IMR-90 (cell line): ENCODE measurements at regions of chr2 and their contacts with region 1.

Region 1: DNA sequence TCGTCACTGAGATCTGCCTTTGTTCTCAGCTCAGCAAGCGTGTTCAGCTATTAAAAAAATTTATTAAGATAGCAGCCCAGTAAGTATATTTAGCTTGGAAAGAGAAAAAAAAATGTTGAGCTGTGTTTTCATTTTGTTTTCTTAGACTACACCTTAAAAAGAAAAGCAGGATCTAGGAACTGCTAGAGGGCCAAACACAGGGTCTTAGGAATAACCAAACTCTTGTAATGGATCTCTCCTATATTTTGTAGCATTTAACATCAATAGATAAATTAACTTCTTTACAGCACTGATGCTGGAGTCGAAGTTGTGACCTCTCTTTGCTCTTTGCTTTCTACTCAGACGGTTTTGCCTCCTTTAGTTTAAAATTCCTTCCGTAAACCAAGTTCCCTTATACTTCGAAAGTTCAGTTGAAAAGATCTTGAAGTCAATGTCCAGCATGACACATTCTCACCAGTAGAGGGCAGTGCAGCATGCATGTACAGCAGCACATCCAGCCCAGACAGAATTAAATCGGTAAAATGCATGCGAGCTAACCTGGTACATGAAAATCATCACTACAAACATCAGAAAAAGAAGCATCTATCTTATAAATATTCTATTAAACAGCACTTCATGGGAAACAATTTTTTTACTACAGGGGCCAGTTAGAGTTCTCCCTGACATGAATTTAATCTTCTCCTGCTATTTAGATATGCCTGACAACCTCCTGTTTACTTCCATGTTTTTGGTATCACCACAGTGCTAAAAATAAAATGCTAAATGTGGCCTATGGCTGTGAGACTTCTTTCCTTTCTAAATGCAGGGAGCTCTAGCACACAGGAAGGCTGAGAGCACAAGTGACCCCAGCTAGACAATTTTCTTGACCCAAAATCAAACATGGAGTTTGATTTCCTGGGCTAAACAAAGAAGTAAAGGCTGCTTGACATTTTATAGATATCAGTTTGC is 48.2 kb upstream of the MAP3K20 start:
- DNase-seq: peak; percentile 93
- ATAC-seq: peak; percentile 77
- H3K4me3 ChIP-seq: no peak overlapping the region
- H3K27ac ChIP-seq: peak overlapping the region; percentile 99; the same call in 1 of the 2 replicates
- H3K4me1 ChIP-seq: peaks cover 9% of the 10 kb centered on the region
- H3K27me3 ChIP-seq: no peaks in the 10 kb centered on the region
- CTCF ChIP-seq: peak; percentile 96
- POLR2A ChIP-seq: peak; percentile 51; the same call in 1 of the 2 replicates
- RAD21 ChIP-seq: peak; percentile 98

Region 2: GRCh38 chr2:172919732-172920131 is 107.7 kb before region 1 on chr2:
- CTCF ChIA-PET with region 1: no interaction called
- POLR2A ChIA-PET with region 1: no interaction called
- dilution Hi-C with region 1: no loop called
- in situ Hi-C with region 1: no loop called
- intact Hi-C with region 1: no loop called
- DNase-seq: no peak
- ATAC-seq: no peak
- H3K4me3 ChIP-seq: no peak overlapping the region
- H3K27ac ChIP-seq: no peak overlapping the region
- H3K4me1 ChIP-seq: peaks cover 6% of the 10 kb centered on the region; the same call in 1 of the 2 replicates
- H3K27me3 ChIP-seq: no peaks in the 10 kb centered on the region
- CTCF ChIP-seq: no peak
- POLR2A ChIP-seq: no peak
- RAD21 ChIP-seq: no peak

Region 3: GRCh38 chr2:173210270-173211196 is 183.1 kb after region 1 on chr2:
- CTCF ChIA-PET with region 1: interaction called, 51 read pairs
- POLR2A ChIA-PET with region 1: no interaction called
- dilution Hi-C with region 1: no loop called
- in situ Hi-C with region 1: loop called (anchors 5 kb)
- intact Hi-C with region 1: loop called (anchors 1 kb)
- DNase-seq: peak; percentile 97
- ATAC-seq: peak; percentile 98
- H3K4me3 ChIP-seq: no peak overlapping the region
- H3K27ac ChIP-seq: peak overlapping the region; percentile 36; the same call in 1 of the 2 replicates
- H3K4me1 ChIP-seq: peaks cover 2% of the 10 kb centered on the region; the same call in 1 of the 2 replicates
- H3K27me3 ChIP-seq: no peaks in the 10 kb centered on the region
- CTCF ChIP-seq: peak; percentile 97
- POLR2A ChIP-seq: 0 out of 2 replicates have a peak, but pooled peaks have one; percentile 30
- RAD21 ChIP-seq: peak; percentile 99

Region 4: GRCh38 chr2:173218326-173219056 is 191.0 kb after region 1 on chr2:
- CTCF ChIA-PET with region 1: interaction called, 32 read pairs
- POLR2A ChIA-PET with region 1: no interaction called
- dilution Hi-C with region 1: no loop called
- in situ Hi-C with region 1: loop called (anchors 5 kb)
- intact Hi-C with region 1: no loop called
- DNase-seq: peak; percentile 24
- ATAC-seq: peak; percentile 50
- H3K4me3 ChIP-seq: no peak overlapping the region
- H3K27ac ChIP-seq: peak overlapping the region; percentile 58; the same call in 1 of the 2 replicates
- H3K4me1 ChIP-seq: peaks cover 15% of the 10 kb centered on the region
- H3K27me3 ChIP-seq: no peaks in the 10 kb centered on the region
- CTCF ChIP-seq: no peak
- POLR2A ChIP-seq: no peak
- RAD21 ChIP-seq: no peak

Region 5: DNA sequence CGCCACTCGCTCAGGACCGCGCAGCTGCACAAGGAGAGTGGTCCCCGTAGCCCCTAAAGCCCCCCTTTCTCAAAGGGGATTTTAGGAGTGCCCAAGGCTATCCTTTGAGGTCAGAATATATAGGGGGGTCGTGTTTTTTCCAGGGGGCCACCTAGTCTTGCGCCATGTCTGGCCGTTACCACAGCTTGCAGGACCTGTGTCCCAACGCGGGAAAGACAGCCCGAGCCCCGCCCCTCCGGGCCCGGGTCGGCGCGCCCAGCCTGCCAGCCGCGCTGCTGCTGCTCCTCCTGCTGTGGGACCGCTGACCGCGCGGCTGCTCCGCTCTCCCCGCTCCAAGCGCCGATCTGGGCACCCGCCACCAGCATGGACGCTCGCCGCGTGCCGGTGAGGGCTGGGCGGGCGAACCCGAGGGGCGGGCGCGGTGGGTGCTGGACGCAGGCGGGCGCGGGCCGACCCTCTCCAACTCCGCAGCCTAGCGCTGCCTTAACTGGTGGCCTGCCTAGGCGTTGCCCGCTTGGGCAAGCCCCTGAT is 327.2 kb after region 1 on chr2 and contains the start of gene CDCA7:
- CTCF ChIA-PET with region 1: no interaction called
- POLR2A ChIA-PET with region 1: no interaction called
- dilution Hi-C with region 1: no loop called
- in situ Hi-C with region 1: loop called (anchors 25 kb)
- intact Hi-C with region 1: loop called (anchors 1 kb)
- DNase-seq: peak; percentile 54
- ATAC-seq: peak; percentile 81
- H3K4me3 ChIP-seq: peak within 1 kb of the TSS; percentile 58
- H3K27ac ChIP-seq: peak within 1 kb of the TSS; percentile 78
- H3K4me1 ChIP-seq: peaks cover 2% of the 10 kb centered on the region; the same call in 1 of the 2 replicates
- H3K27me3 ChIP-seq: peaks cover 10% of the 10 kb centered on the region
- CTCF ChIP-seq: no peak
- POLR2A ChIP-seq: no peak
- RAD21 ChIP-seq: 0 out of 2 replicates have a peak, but pooled peaks have one; percentile 1
- total RNA-seq, gene CDCA7: 11.4 and 12.0 TPM in 2 replicates

Region 6: GRCh38 chr2:173448938-173449471 is 421.6 kb after region 1 on chr2:
- CTCF ChIA-PET with region 1: interaction called, 3 read pairs
- POLR2A ChIA-PET with region 1: no interaction called
- dilution Hi-C with region 1: no loop called
- in situ Hi-C with region 1: no loop called
- intact Hi-C with region 1: loop called (anchors 2 kb)
- DNase-seq: peak; percentile 73
- ATAC-seq: peak; percentile 97
- H3K4me3 ChIP-seq: peak overlapping the region; percentile 25
- H3K27ac ChIP-seq: peak overlapping the region; percentile 13; the same call in 1 of the 2 replicates
- H3K4me1 ChIP-seq: no peaks in the 10 kb centered on the region
- H3K27me3 ChIP-seq: peaks cover 14% of the 10 kb centered on the region
- CTCF ChIP-seq: peak; percentile 79
- POLR2A ChIP-seq: no peak
- RAD21 ChIP-seq: peak; percentile 67